ENCODE measurements at regions of chr18 and their contacts with region 1.

Region 1: DNA sequence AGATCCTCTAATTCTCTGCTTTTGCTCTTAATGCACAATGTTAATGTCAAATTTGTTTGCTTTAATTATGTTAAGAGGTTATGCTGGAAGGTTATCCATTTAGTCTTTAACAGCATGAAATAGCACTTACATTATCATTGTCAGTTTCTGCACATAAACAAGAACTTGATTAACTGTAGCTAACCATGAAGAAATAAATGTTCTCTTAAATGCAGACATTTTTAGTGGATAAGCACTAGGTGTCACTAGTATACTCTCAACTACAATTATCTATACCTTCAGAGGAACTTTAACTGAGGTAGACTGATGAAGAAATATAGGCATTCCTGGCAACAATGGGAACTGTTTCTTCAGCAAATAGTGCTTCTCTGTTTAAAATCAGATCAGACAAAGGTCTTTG is 178.8 kb upstream of the CHST9 start:
- DNase-seq: no peak
- ATAC-seq: no peak
- H3K4me3 Mint-ChIP-seq: no peak overlapping the region
- H3K27ac Mint-ChIP-seq: no peak overlapping the region
- H3K4me1 Mint-ChIP-seq: no peaks in the 10 kb centered on the region
- H3K27me3 Mint-ChIP-seq: no peaks in the 10 kb centered on the region

Region 2: DNA sequence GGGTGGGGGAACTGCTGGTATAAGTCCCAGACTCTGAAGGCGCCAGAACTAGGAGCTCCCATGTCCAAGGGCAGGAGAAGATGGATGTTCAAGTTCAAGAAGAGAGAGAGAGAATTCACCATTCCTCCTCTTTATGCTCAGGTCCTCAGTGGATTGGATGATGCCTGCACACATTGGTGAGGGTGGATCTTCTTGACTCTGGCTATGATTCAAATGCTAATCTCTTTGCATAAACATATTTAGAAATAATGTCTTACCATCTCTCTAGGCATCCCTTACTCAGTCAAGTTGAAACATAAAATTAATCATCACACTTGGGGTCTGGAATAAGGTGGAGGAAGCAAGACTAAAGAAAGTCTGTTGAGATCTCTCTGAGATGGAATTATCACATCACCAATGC is 31.9 kb after region 1 on chr18:
- CTCF ChIA-PET with region 1: no interaction called
- POLR2A ChIA-PET with region 1: no interaction called
- intact Hi-C with region 1: no loop called
- DNase-seq: no peak
- ATAC-seq: no peak
- H3K4me3 Mint-ChIP-seq: no peak overlapping the region
- H3K27ac Mint-ChIP-seq: no peak overlapping the region
- H3K4me1 Mint-ChIP-seq: no peaks in the 10 kb centered on the region
- H3K27me3 Mint-ChIP-seq: no peaks in the 10 kb centered on the region

Region 3: GRCh38 chr18:27599202-27599829 is 235.4 kb after region 1 on chr18:
- CTCF ChIA-PET with region 1: no interaction called
- POLR2A ChIA-PET with region 1: no interaction called
- intact Hi-C with region 1: loop called (anchors 2 to 10 kb)
- DNase-seq: peak; percentile 57
- ATAC-seq: no peak
- H3K4me3 Mint-ChIP-seq: no peak overlapping the region
- H3K27ac Mint-ChIP-seq: no peak overlapping the region
- H3K4me1 Mint-ChIP-seq: no peaks in the 10 kb centered on the region
- H3K27me3 Mint-ChIP-seq: no peaks in the 10 kb centered on the region